PC-9 (cell line): ENCODE measurements at regions of chr3 and their contacts with region 1.

Region 1: GRCh38 chr3:16264708-16265454 is at the starts of genes DPH3 and OXNAD1:
- DNase-seq: peak; percentile 94 to 98
- H3K4me3 ChIP-seq: peak within 1 kb of the TSS; percentile 98
- H3K27ac ChIP-seq: peak within 1 kb of the TSS; percentile 67
- H3K4me1 ChIP-seq: peaks cover 33% of the 10 kb centered on the region
- H3K27me3 ChIP-seq: no peaks in the 10 kb centered on the region
- CTCF ChIP-seq: no peak
- total RNA-seq, gene DPH3: 12.1 and 16.2 TPM in 2 replicates
- total RNA-seq, gene OXNAD1: 15.7 and 18.5 TPM in 2 replicates

Region 2: GRCh38 chr3:14857506-14857905 is 1407.4 kb before region 1 on chr3:
- CTCF ChIA-PET with region 1: no interaction called
- POLR2A ChIA-PET with region 1: no interaction called
- intact Hi-C with region 1: no loop called
- DNase-seq: no peak
- H3K4me3 ChIP-seq: no peak overlapping the region
- H3K27ac ChIP-seq: no peak overlapping the region
- H3K4me1 ChIP-seq: no peaks in the 10 kb centered on the region
- H3K27me3 ChIP-seq: no peaks in the 10 kb centered on the region
- CTCF ChIP-seq: peak; percentile 44; the same call in 1 of the 2 replicates

Region 3: GRCh38 chr3:15629860-15630597 is 634.9 kb before region 1 on chr3:
- CTCF ChIA-PET with region 1: no interaction called
- POLR2A ChIA-PET with region 1: interaction called, 13 read pairs
- intact Hi-C with region 1: loop called (anchors 5 kb)
- DNase-seq: peak; percentile 57 to 60
- H3K4me3 ChIP-seq: peak overlapping the region; percentile 15; the same call in 1 of the 2 replicates
- H3K27ac ChIP-seq: peak overlapping the region; percentile 79
- H3K4me1 ChIP-seq: peaks cover 54% of the 10 kb centered on the region
- H3K27me3 ChIP-seq: no peaks in the 10 kb centered on the region
- CTCF ChIP-seq: peak; percentile 79

Region 4: GRCh38 chr3:15636003-15636709 is 628.7 kb before region 1 on chr3:
- CTCF ChIA-PET with region 1: no interaction called
- POLR2A ChIA-PET with region 1: interaction called, 13 read pairs
- intact Hi-C with region 1: loop called (anchors 5 kb)
- DNase-seq: peak; percentile 70 to 93
- H3K4me3 ChIP-seq: peak overlapping the region; percentile 46; the same call in 1 of the 2 replicates
- H3K27ac ChIP-seq: peak overlapping the region; percentile 95
- H3K4me1 ChIP-seq: peaks cover 81% of the 10 kb centered on the region
- H3K27me3 ChIP-seq: no peaks in the 10 kb centered on the region
- CTCF ChIP-seq: no peak

Region 5: GRCh38 chr3:16284633-16285032 is 19.8 kb after region 1 on chr3:
- CTCF ChIA-PET with region 1: no interaction called
- POLR2A ChIA-PET with region 1: no interaction called
- intact Hi-C with region 1: no loop called
- DNase-seq: no peak
- H3K4me3 ChIP-seq: no peak overlapping the region
- H3K27ac ChIP-seq: no peak overlapping the region
- H3K4me1 ChIP-seq: no peaks in the 10 kb centered on the region
- H3K27me3 ChIP-seq: no peaks in the 10 kb centered on the region
- CTCF ChIP-seq: no peak

Region 6: GRCh38 chr3:16550676-16551341 is 285.9 kb after region 1 on chr3:
- CTCF ChIA-PET with region 1: interaction called, 3 read pairs
- POLR2A ChIA-PET with region 1: no interaction called
- intact Hi-C with region 1: loop called (anchors 5 kb)
- DNase-seq: peak; percentile 61 to 75
- H3K4me3 ChIP-seq: no peak overlapping the region
- H3K27ac ChIP-seq: no peak overlapping the region
- H3K4me1 ChIP-seq: no peaks in the 10 kb centered on the region
- H3K27me3 ChIP-seq: no peaks in the 10 kb centered on the region
- CTCF ChIP-seq: peak; percentile 89

Region 7: GRCh38 chr3:16671690-16672089 is 406.8 kb after region 1 on chr3:
- CTCF ChIA-PET with region 1: no interaction called
- POLR2A ChIA-PET with region 1: interaction called, 19 read pairs
- intact Hi-C with region 1: no loop called
- DNase-seq: no peak
- H3K4me3 ChIP-seq: no peak overlapping the region
- H3K27ac ChIP-seq: no peak overlapping the region
- H3K4me1 ChIP-seq: no peaks in the 10 kb centered on the region
- H3K27me3 ChIP-seq: no peaks in the 10 kb centered on the region
- CTCF ChIP-seq: no peak